ENCODE measurements at regions of chr15 and their contacts with region 1.

Region 1: DNA sequence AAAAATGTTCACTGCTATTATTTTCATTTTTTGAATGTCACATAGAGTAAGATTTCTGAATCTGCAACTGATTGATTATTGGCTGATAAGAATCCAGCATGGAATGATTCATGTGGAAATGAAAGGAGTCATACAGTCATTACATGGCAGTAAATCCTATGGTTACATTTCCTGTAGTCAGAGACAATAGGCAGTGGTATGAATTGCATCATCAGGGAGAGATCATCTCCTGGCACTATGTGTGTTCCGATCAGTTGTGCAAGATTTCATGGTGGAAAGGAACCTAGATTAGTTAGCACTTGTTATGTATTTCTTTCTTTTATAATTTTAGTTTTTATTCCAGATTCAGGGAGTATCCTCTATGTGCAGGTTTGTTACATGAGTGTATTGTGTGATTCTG is 38.8 kb downstream of the SLC12A1 start:
- DNase-seq: no peak
- H3K4me3 ChIP-seq: no peak overlapping the region
- H3K27ac ChIP-seq: no peak overlapping the region
- H3K4me1 ChIP-seq: peaks cover 4 to 9% of the 10 kb centered on the region in 2 donors
- H3K27me3 ChIP-seq: no peaks in the 10 kb centered on the region
- CTCF ChIP-seq: no peak
- POLR2A ChIP-seq: no peak

Region 2: GRCh38 chr15:47196057-47196456 is 1048.9 kb before region 1 on chr15:
- intact Hi-C with region 1: loop called (anchors 10 kb)
- DNase-seq: peak; percentile 82 to 88
- H3K4me3 ChIP-seq: no peak overlapping the region
- H3K27ac ChIP-seq: no peak overlapping the region
- H3K4me1 ChIP-seq: peaks cover 10 to 23% of the 10 kb centered on the region in 2 donors
- H3K27me3 ChIP-seq: no peaks in the 10 kb centered on the region
- CTCF ChIP-seq: peak; percentile 54 to 91 (median 82)
- POLR2A ChIP-seq: no peak

Region 3: DNA sequence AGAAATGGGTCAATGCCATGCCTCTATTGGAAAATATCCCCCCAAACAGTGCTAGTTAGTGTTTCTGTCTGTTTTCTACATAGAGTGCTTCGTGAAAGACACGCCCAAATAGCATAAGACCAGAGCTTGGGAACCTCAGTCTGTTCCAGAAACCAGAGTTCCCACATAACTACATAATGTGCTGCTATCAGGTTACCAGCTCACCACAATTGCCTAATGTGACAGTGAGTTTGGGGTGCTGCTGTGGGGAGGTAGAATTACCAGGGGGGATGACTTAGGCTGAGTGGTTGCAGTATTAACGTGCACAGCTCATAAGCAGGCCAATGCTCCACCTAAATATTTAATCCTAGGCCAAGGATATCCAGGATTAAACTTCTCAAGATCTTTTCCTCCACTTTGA is 125.5 kb after region 1 on chr15:
- intact Hi-C with region 1: no loop called
- DNase-seq: no peak
- H3K4me3 ChIP-seq: no peak overlapping the region
- H3K27ac ChIP-seq: no peak overlapping the region
- H3K4me1 ChIP-seq: peaks cover 0 to 3% of the 10 kb centered on the region in 2 donors
- H3K27me3 ChIP-seq: no peaks in the 10 kb centered on the region
- CTCF ChIP-seq: no peak
- POLR2A ChIP-seq: no peak

Region 4: DNA sequence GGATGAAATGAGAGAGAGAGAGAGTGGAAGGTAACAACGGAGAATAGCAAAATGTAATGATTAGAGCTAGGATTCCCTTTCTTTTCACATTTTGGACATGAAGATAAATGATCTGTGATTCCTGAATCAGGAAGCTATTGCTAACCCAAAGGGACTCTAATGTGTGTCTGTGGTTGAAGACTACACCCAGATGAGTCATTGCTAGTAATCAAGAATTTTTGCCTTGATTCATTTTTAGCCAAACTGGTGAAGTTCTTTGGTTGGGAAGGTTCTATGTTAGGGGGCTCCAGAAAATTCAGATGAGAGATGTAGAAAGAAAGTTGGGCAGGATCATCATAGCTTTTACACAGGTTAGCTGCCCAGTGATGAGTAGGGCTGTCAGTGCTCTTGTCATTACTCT is 202.7 kb after region 1 on chr15:
- intact Hi-C with region 1: no loop called
- DNase-seq: no peak
- H3K4me3 ChIP-seq: no peak overlapping the region
- H3K27ac ChIP-seq: no peak overlapping the region
- H3K4me1 ChIP-seq: no peaks in the 10 kb centered on the region
- H3K27me3 ChIP-seq: no peaks in the 10 kb centered on the region
- CTCF ChIP-seq: no peak
- POLR2A ChIP-seq: no peak

Measured in thyroid gland (tissue), 4 donors.